Esophagus muscularis mucosa (tissue), 4 donors: ENCODE measurements at regions of chr7 and their contacts with region 1.

Region 1: DNA sequence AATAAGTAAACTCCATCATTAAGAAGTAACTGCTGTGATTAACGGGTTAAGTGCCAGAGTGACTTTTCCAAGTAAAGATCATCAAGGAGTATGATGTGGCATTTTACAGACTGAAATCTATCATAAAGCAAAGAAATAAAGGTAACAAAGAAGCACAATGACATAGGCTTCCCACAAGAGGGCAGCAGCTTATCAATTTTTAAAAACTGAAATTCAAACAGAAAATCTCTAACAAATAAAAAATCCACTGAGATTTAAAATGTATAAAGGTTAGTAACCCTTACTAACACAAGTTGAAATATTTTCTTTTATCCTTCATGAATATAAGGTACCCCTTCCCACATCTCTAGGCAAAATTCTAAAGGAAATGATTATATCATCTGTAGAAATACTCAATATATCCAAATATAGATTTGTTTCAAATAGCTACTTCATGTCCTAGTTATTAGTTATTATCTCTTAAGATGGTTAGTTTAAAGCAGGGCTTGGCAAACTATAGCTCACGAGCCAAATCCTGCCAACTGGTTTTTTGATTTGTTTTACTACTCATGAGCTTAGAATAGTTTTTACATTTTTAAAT is 29.2 kb downstream of the FAM3C start:
- DNase-seq: no peak
- H3K4me3 ChIP-seq: no peak overlapping the region
- H3K27ac ChIP-seq: no peak overlapping the region
- H3K4me1 ChIP-seq: peaks cover 4 to 14% (median 6%) of the 10 kb centered on the region in 4 donors
- H3K27me3 ChIP-seq: no peaks in the 10 kb centered on the region
- CTCF ChIP-seq: peak; percentile 70 to 83 (median 79)
- EP300 ChIP-seq: no peak
- POLR2A ChIP-seq: no peak

Region 2: DNA sequence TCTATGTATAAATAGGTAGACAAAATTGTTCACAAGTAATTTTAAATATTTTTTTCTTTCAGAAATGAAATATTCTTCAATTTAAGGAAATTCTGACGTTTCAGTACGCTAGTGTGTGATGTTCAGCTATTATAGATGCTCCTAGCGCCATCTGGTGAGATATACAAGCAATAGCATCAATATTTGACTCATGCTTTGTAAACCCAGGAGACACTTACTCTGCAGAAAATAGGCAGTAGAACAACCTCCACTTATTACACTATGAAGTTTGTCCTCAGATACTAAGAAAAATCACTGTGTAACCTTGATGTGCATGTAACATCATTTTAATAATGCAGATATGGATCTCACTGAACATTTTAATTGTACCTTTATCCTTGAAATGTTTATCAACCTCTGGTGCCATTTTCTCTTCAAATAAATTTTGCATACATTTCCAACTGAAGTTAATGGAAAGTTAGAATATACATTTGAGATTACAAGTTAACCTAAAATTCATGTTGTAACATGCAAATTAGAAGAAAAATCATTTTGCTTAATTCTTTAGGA is 180.7 kb after region 1 on chr7:
- intact Hi-C with region 1: loop called (anchors 2 kb)
- DNase-seq: no peak
- H3K4me3 ChIP-seq: no peak overlapping the region
- H3K27ac ChIP-seq: no peak overlapping the region
- H3K4me1 ChIP-seq: no peaks in the 10 kb centered on the region
- H3K27me3 ChIP-seq: no peaks in the 10 kb centered on the region
- CTCF ChIP-seq: peak; percentile 73 to 75 (median 74)
- EP300 ChIP-seq: no peak
- POLR2A ChIP-seq: no peak